ENCODE measurements at regions of chr18 and their contacts with region 1.

Region 1: GRCh38 chr18:70848329-70848728 is 559.5 kb downstream of the SOCS6 start:
- DNase-seq: no peak
- ATAC-seq: no peak
- H3K4me3 ChIP-seq: no peak overlapping the region
- H3K4me3 Mint-ChIP-seq: no peak overlapping the region
- H3K27ac ChIP-seq: no peak overlapping the region
- H3K27ac Mint-ChIP-seq: peak overlapping the region in 1 of 9 donors; percentile 15
- H3K4me1 ChIP-seq: no peaks in the 10 kb centered on the region
- H3K4me1 Mint-ChIP-seq: peaks cover 0 to 6% (median 5%) of the 10 kb centered on the region in 7 donors
- H3K27me3 ChIP-seq: no peaks in the 10 kb centered on the region
- H3K27me3 Mint-ChIP-seq: no peaks in the 10 kb centered on the region

Region 2: DNA sequence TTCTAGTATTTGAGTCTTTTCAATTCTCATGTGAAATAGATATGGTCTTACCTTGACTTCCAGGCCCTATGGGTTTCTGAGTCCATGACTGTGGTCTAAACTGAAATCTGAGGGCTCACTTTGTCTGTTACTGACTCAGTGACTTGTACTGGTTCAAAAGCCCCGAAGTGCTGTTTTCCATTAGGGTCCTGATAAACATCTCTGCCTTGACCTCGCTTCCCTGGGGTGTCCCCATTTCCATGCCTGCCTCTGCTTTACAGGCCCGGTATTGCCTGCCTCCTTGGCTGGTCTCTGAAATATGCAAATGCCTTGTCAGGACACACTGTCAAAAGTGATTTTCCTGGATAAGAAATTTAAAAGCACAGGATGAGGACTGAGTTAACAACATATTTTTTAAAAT is 20.7 kb before region 1 on chr18:
- CTCF ChIA-PET with region 1: no interaction called
- POLR2A ChIA-PET with region 1: no interaction called
- intact Hi-C with region 1: loop called in 1 of 2 experiments (anchors 2 kb)
- DNase-seq: no peak
- ATAC-seq: no peak
- H3K4me3 ChIP-seq: no peak overlapping the region
- H3K4me3 Mint-ChIP-seq: no peak overlapping the region
- H3K27ac ChIP-seq: no peak overlapping the region
- H3K27ac Mint-ChIP-seq: peak overlapping the region in 2 of 9 donors; percentile 32 to 70
- H3K4me1 ChIP-seq: no peaks in the 10 kb centered on the region
- H3K4me1 Mint-ChIP-seq: peaks cover 0 to 5% (median 0%) of the 10 kb centered on the region in 7 donors
- H3K27me3 ChIP-seq: no peaks in the 10 kb centered on the region
- H3K27me3 Mint-ChIP-seq: no peaks in the 10 kb centered on the region